HEK293 (cell line): ENCODE measurements at regions of chr22 and their contacts with region 1.

Region 1: GRCh38 chr22:19909350-19910179 is 32.0 kb upstream of the COMT start:
- H3K4me3 ChIP-seq: no peak overlapping the region
- H3K27ac ChIP-seq: no peak overlapping the region
- H3K4me1 ChIP-seq: no peaks in the 10 kb centered on the region
- CTCF ChIP-seq: peak; percentile 94

Region 2: GRCh38 chr22:19723983-19724827 is 185.4 kb before region 1 on chr22:
- CTCF ChIA-PET with region 1: interaction called, 184 read pairs
- POLR2A ChIA-PET with region 1: no interaction called
- H3K4me3 ChIP-seq: peak overlapping the region; percentile 36
- H3K27ac ChIP-seq: no peak overlapping the region; the same call in 1 of the 2 replicates
- H3K4me1 ChIP-seq: no peaks in the 10 kb centered on the region
- CTCF ChIP-seq: no peak

Region 3: DNA sequence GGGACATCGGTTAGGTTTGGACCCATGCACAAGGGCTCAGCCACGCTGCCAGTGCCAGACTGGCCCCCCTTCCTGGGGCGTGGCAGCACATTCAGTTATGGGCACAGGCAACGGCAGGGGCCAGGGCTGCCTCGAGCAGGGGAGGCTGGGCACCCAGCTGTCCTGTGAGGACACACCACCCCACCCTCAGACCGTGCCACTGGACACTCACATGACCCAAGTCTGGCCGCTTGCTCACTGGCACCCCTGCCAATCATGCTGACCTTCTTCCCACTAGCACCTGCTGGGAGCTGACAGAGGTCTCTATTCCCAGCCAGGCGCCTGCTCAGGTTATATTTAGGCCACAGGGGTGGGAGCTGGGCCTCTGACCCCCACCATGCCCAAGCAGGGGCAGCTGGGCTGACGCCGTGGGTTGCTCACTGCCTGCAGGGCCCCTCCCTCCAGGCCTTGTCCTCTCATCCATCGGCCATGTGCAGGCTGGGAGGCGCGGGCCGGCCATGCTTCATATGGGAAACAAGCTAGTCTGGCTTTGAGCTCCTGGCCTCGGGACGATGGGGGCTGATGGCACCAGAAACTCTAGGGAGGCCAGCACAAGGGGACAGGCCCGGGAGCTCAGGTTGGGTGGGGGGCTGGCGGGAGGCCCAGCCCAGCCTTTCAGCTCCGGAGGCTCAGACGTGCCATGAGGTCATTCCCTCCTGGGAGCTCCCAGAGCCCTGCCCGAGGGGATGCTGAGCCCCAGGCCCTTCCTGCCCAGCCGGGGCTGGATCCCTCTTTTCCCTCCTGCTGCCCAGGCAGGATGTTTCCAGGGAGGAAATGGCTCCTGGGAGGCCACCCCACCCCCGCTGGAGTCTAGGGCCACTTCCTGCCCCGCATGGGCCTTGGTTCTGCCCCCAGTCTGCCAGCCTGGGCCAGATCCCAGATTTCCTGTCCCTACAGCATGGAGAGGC is 164.1 kb before region 1 on chr22:
- CTCF ChIA-PET with region 1: interaction called, 19 read pairs
- POLR2A ChIA-PET with region 1: no interaction called
- H3K4me3 ChIP-seq: no peak overlapping the region
- H3K27ac ChIP-seq: no peak overlapping the region
- H3K4me1 ChIP-seq: no peaks in the 10 kb centered on the region
- CTCF ChIP-seq: no peak

Region 4: GRCh38 chr22:19756288-19757128 is 153.1 kb before region 1 on chr22:
- CTCF ChIA-PET with region 1: interaction called, 11 read pairs
- POLR2A ChIA-PET with region 1: interaction called, 3 read pairs
- H3K4me3 ChIP-seq: peak overlapping the region; percentile 23
- H3K27ac ChIP-seq: no peak overlapping the region; the same call in 1 of the 2 replicates
- H3K4me1 ChIP-seq: no peaks in the 10 kb centered on the region
- CTCF ChIP-seq: peak; percentile 94

Region 5: DNA sequence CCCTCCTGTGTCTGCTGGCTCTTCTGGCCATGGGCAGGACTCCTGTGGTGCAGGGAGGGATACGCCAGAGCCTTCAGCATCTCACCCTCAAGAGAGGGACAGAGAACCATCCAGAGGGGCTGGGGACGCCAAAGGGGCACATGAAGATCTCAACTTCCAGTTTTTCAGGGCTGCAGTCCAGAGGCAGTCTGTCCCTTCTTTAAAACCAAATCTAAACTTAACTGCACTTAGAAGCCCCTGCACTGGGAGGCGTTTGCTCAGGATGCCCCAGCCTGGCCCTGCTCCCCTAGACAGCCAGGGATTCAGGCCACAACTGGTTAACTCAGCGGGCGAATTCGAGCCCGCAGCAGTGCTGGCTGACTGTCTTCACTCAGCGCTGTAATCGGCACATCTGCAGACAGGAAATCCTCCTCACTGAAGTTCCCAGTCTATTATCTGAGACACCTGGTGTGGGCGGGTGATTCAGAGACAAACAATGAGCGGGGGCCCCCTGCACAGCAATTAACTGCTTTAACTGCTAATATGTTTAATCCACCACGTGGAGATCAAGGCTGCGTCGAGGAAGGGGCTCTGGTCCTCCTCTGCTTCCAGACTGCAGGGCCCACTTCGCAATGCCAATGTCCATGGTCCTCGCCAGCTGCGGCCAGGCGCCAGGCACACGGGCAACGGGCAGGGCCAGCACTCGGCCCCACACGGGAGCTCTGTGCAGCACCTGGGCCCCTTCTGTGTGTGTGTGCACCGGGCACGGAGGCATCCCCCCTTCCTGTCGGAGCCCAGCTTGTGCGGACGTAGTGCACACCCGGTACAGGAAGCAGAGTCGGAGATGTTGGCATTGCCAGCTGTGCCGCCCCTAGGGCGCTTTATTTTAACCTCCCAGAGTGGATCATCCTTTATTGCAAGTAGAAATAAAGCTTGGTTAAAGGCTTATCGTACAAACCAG is 18.0 kb before region 1 on chr22:
- CTCF ChIA-PET with region 1: interaction called, 13 read pairs
- POLR2A ChIA-PET with region 1: no interaction called
- H3K4me3 ChIP-seq: no peak overlapping the region
- H3K27ac ChIP-seq: peak overlapping the region; percentile 13; the same call in 1 of the 2 replicates
- H3K4me1 ChIP-seq: peaks cover 7% of the 10 kb centered on the region
- CTCF ChIP-seq: no peak

Region 6: DNA sequence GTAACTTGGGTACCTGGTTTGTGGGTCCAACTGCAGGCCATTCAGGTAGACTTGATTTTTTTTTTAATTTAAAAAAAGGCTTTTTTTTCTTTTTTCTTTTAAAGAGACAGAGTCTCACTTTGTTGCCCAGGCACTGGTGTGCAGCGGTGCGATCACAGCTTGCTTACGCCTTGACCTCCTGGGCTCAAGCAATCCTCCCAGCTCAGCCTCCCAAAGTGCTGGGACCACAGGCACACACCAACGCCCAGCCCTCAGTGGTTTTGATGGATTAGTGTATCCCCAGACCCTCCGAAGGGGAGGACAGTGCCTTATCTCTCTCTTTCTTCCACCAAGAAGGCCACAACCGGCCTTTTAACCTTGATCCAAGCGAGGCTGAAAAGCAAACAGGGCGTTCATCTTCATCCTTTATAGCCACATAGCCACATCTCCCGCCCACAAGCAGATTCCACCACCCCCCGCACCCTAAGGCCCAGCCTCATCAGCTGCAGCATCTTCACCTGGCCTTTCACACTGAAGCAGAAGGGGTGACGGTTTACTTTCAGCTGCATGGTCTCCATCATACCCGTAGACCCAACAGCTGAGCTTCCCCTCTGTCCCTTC is 14.4 kb after region 1 on chr22:
- CTCF ChIA-PET with region 1: interaction called, 13 read pairs
- POLR2A ChIA-PET with region 1: interaction called, 3 read pairs
- H3K4me3 ChIP-seq: no peak overlapping the region
- H3K27ac ChIP-seq: no peak overlapping the region
- H3K4me1 ChIP-seq: no peaks in the 10 kb centered on the region
- CTCF ChIP-seq: no peak

Region 7: DNA sequence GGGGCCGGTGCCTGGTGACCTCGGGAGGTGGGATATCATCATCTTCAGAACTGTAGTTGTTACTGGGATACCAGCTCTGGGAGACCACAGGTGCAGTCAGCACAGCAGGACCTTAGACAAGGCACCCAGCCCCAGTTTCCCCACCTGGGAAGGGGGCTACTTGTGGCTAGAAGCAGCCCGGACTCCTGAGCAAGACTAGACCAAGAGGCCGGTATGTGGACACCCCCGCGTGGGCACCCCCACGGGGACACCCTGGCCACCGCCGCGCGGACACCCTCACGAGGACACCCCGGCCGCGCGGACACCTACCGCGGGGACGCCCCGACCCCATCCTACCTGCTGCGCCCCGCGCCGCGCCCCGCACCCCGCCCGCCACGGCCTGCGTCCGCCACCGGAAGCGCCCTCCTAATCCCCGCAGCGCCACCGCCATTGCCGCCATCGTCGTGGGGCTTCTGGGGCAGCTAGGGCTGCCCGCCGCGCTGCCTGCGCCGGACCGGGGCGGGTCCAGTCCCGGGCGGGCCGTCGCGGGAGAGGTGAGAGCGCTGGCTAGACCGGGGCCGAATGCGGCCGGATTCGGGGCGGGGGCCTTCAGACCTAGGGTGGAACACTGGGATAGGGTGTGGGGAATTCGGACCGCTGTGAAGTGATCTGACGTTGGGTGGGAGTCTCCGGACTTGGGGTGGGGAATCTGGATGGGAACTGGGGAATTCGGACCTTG is 32.0 kb after region 1 on chr22 and contains the starts of genes COMT and TXNRD2:
- CTCF ChIA-PET with region 1: interaction called, 18 read pairs
- POLR2A ChIA-PET with region 1: interaction called, 4 read pairs
- H3K4me3 ChIP-seq: peak within 1 kb of the TSS; percentile 79
- H3K27ac ChIP-seq: peak within 1 kb of the TSS; percentile 81
- H3K4me1 ChIP-seq: peaks cover 4% of the 10 kb centered on the region; the same call in 1 of the 2 replicates
- CTCF ChIP-seq: no peak